Activated CD8-positive, alpha-beta T cell treated with anti-CD3 and anti-CD28 coated beads for 36 hours (primary cell): ENCODE measurements at regions of chr11 and their contacts with region 1.

Region 1: DNA sequence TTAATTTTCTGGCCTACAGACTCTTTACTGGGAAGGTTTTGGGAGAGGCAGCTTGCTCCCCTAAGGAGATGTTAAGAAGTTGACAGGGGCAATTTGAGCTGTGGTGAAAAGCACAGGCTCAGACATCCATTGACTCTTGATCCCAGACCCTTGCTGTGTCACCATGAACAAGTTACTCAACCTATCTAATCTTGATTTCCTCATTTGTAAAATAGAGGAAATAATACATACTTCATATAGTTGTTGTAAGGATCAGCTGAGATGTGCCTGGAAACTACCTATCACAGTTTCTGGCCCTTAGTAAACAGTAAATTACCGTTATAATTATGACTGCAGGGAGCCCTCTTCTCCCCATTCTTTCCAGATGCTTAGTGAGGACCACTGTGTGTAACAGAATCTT is 16.6 kb upstream of the SCGB1D4 start:
- DNase-seq: no peak
- ATAC-seq: no peak
- H3K4me3 Mint-ChIP-seq: no peak overlapping the region
- H3K27ac Mint-ChIP-seq: no peak overlapping the region
- H3K4me1 Mint-ChIP-seq: peaks cover 9% of the 10 kb centered on the region
- H3K27me3 Mint-ChIP-seq: peaks cover 21% of the 10 kb centered on the region
- CTCF ChIP-seq: no peak

Region 2: GRCh38 chr11:62169091-62169847 is 146.2 kb before region 1 on chr11:
- CTCF ChIA-PET with region 1: interaction called, 30 read pairs
- POLR2A ChIA-PET with region 1: no interaction called
- intact Hi-C with region 1: loop called (anchors 5 kb)
- DNase-seq: no peak
- ATAC-seq: no peak
- H3K4me3 Mint-ChIP-seq: no peak overlapping the region
- H3K27ac Mint-ChIP-seq: no peak overlapping the region
- H3K4me1 Mint-ChIP-seq: peaks cover 4% of the 10 kb centered on the region
- H3K27me3 Mint-ChIP-seq: peaks cover 22% of the 10 kb centered on the region
- CTCF ChIP-seq: no peak

Region 3: GRCh38 chr11:62233730-62234129 is 81.7 kb before region 1 on chr11:
- CTCF ChIA-PET with region 1: interaction called, 11 read pairs
- POLR2A ChIA-PET with region 1: no interaction called
- intact Hi-C with region 1: no loop called
- DNase-seq: no peak
- ATAC-seq: no peak
- H3K4me3 Mint-ChIP-seq: no peak overlapping the region
- H3K27ac Mint-ChIP-seq: no peak overlapping the region
- H3K4me1 Mint-ChIP-seq: no peaks in the 10 kb centered on the region
- H3K27me3 Mint-ChIP-seq: peaks cover 29% of the 10 kb centered on the region
- CTCF ChIP-seq: no peak

Region 4: DNA sequence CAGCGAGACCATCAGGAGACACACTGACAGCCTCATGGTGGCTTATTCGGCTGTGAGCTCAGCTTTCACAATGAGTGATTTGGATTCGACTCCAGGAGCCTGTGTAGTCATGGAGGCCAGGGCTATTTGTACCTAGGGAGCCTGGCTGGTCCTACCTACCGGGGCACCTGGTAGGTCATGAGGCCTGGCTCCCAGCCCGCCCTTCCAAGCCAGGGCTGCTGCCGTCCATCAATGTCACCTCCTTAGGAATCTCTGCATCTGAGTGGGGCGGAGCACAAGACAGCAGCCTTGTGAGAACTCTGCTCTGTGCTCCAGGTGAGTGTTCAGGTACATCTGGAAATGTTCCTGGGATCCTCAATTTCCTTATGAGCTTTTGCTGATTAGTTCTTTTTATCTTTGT is 16.5 kb before region 1 on chr11 and contains the start of gene SCGB1D4:
- CTCF ChIA-PET with region 1: interaction called, 25 read pairs
- POLR2A ChIA-PET with region 1: interaction called, 4 read pairs
- intact Hi-C with region 1: no loop called
- DNase-seq: no peak
- ATAC-seq: no peak
- H3K4me3 Mint-ChIP-seq: no peak within 1 kb of the TSS
- H3K27ac Mint-ChIP-seq: no peak within 1 kb of the TSS
- H3K4me1 Mint-ChIP-seq: no peaks in the 10 kb centered on the region
- H3K27me3 Mint-ChIP-seq: peaks cover 17% of the 10 kb centered on the region
- CTCF ChIP-seq: no peak
- total RNA-seq, gene SCGB1D4: not detected